Activated naive CD4-positive, alpha-beta T cell treated with anti-CD3 and anti-CD28 coated beads, Interleukin-2, amount 10 ng/mL, durations not matched to agents 7 days and 5 days (primary cell): ENCODE measurements at regions of chr10 and their contacts with region 1.

Region 1: DNA sequence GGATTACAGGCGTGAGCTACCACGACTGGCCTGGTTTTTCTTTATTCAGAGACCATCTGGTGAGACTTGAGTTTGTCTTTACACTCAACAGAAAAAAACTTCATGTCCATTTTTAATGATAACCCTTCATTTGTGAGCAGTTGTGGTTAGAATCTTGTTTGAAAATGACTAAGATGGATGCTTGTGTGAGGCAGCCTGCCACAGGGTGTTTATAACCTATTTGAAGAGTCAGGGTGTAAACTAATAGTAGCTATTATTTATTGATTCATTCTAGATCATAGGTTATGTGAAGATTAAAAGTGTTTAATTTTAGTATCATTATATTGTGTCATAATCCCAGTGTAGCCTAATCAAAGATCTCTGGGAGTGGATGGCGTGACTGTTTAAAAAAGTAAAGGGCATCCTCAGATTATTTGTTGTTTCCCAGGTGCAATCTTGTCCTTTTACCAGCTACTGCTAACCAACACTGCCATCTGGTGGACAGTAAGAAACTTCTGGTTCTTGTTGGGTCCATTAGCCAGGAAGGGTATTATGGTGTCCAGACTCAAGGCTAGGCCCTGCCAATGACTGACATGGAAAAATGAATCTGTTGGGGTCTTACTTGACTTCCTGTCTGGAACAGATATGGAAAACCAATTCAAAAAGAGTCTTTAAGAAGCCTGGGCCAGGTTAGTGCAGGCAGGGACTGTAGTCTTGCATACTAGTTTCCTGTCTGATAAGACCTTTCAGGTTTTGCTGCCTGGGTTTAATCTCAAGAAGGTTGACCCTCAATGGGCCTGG is 24.9 kb downstream of the NRBF2 start:
- DNase-seq: peak; percentile 54
- H3K4me3 Mint-ChIP-seq: no peak overlapping the region
- H3K27ac Mint-ChIP-seq: no peak overlapping the region
- H3K4me1 Mint-ChIP-seq: peaks cover 5% of the 10 kb centered on the region
- H3K27me3 Mint-ChIP-seq: no peaks in the 10 kb centered on the region

Region 2: GRCh38 chr10:62437696-62438095 is 720.3 kb before region 1 on chr10:
- CTCF ChIA-PET with region 1: interaction called, 13 read pairs
- DNase-seq: no peak
- H3K4me3 Mint-ChIP-seq: no peak overlapping the region
- H3K27ac Mint-ChIP-seq: no peak overlapping the region
- H3K4me1 Mint-ChIP-seq: peaks cover 10% of the 10 kb centered on the region
- H3K27me3 Mint-ChIP-seq: peaks cover 11% of the 10 kb centered on the region

Region 3: GRCh38 chr10:62594093-62594520 is 563.9 kb before region 1 on chr10:
- CTCF ChIA-PET with region 1: interaction called, 26 read pairs
- DNase-seq: peak; percentile 64
- H3K4me3 Mint-ChIP-seq: no peak overlapping the region
- H3K27ac Mint-ChIP-seq: no peak overlapping the region
- H3K4me1 Mint-ChIP-seq: no peaks in the 10 kb centered on the region
- H3K27me3 Mint-ChIP-seq: peaks cover 8% of the 10 kb centered on the region

Region 4: DNA sequence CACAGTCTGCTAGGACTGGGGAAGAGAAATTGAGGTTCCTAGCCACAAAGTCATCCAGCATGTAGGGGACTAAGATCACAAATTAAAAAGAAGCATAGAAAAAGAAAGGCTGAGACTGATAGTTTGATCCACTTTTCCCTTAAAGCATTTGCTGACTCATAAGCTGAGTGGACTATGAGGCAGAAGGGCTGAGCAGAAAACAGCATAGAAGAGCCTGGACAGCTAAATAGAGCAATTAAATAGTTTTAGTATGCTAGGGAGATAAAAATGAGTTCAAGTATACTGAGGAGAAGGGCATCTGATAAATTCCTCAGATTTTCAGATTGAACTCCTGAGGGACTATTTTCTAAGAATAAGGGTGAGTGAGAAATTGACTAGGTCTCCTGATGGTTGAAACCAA is 185.9 kb before region 1 on chr10:
- CTCF ChIA-PET with region 1: no interaction called
- DNase-seq: no peak
- H3K4me3 Mint-ChIP-seq: no peak overlapping the region
- H3K27ac Mint-ChIP-seq: no peak overlapping the region
- H3K4me1 Mint-ChIP-seq: no peaks in the 10 kb centered on the region
- H3K27me3 Mint-ChIP-seq: peaks cover 2% of the 10 kb centered on the region

Region 5: DNA sequence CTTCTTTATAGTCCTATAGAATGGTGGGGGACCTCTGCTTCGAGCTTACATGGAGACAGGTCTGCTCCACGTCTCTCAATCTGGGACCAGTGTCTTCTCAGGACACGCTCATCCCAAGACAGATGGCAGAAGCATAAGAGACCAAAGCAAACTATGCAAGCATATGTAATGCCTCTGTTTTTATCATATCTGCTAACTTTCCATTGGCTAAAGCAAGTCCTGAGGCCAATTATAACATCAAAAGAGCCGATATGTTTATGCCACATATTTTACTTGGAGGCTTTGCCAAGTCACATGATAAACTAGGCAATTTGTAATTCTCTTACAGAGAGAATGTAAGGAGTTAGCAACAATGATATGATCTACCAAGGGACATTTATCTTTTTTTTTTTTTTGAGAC is 127.5 kb before region 1 on chr10:
- CTCF ChIA-PET with region 1: no interaction called
- DNase-seq: no peak
- H3K4me3 Mint-ChIP-seq: no peak overlapping the region
- H3K27ac Mint-ChIP-seq: no peak overlapping the region
- H3K4me1 Mint-ChIP-seq: no peaks in the 10 kb centered on the region
- H3K27me3 Mint-ChIP-seq: no peaks in the 10 kb centered on the region

Region 6: GRCh38 chr10:63120554-63120953 is 37.5 kb before region 1 on chr10:
- CTCF ChIA-PET with region 1: no interaction called
- DNase-seq: no peak
- H3K4me3 Mint-ChIP-seq: no peak overlapping the region
- H3K27ac Mint-ChIP-seq: no peak overlapping the region
- H3K4me1 Mint-ChIP-seq: no peaks in the 10 kb centered on the region
- H3K27me3 Mint-ChIP-seq: peaks cover 7% of the 10 kb centered on the region

Region 7: DNA sequence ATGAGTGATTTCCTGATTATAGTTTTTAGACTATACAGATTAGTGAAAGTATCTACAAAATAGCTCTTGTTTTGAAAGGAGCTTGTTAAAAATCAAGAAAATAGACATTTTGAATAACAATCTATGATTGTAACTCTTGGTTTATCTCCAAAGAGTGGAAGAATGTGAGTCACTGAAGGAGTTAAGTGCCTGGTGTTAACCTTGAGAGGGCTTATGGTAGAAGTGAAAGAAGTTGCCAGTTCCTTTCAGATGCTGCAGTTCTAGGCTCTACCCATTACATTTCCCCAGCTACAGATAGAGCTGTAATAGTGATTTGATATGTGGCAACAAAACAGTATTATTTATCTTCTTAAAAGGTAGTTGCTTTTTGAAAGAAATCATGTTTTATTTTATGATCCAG is 12.3 kb before region 1 on chr10:
- CTCF ChIA-PET with region 1: interaction called, 23 read pairs
- DNase-seq: no peak
- H3K4me3 Mint-ChIP-seq: no peak overlapping the region
- H3K27ac Mint-ChIP-seq: peak overlapping the region; percentile 45
- H3K4me1 Mint-ChIP-seq: peaks cover 21% of the 10 kb centered on the region
- H3K27me3 Mint-ChIP-seq: no peaks in the 10 kb centered on the region